Ascending aorta (tissue), 2 donors: ENCODE measurements at regions of chr12 and their contacts with region 1.

Region 1: GRCh38 chr12:112125250-112125999 is at the start of gene TRAFD1:
- DNase-seq: peak; percentile 92 to 98
- H3K4me3 ChIP-seq: peak within 1 kb of the TSS; percentile 87 to 94
- H3K27ac ChIP-seq: peak within 1 kb of the TSS; percentile 95 to 97
- H3K4me1 ChIP-seq: peaks cover 17 to 34% of the 10 kb centered on the region in 2 donors
- H3K27me3 ChIP-seq: no peaks in the 10 kb centered on the region
- CTCF ChIP-seq: no peak
- total RNA-seq, gene TRAFD1: 9.3 TPM

Region 2: GRCh38 chr12:111287125-111287900 is 838.1 kb before region 1 on chr12:
- intact Hi-C with region 1: no loop called
- DNase-seq: no peak
- H3K4me3 ChIP-seq: no peak overlapping the region
- H3K27ac ChIP-seq: no peak overlapping the region
- H3K4me1 ChIP-seq: no peaks in the 10 kb centered on the region
- H3K27me3 ChIP-seq: no peaks in the 10 kb centered on the region
- CTCF ChIP-seq: no peak

Region 3: GRCh38 chr12:111942557-111942956 is 182.9 kb before region 1 on chr12:
- intact Hi-C with region 1: loop called (anchors 10 kb)
- DNase-seq: no peak
- H3K4me3 ChIP-seq: no peak overlapping the region
- H3K27ac ChIP-seq: no peak overlapping the region
- H3K4me1 ChIP-seq: peaks cover 0 to 7% of the 10 kb centered on the region in 2 donors
- H3K27me3 ChIP-seq: no peaks in the 10 kb centered on the region
- CTCF ChIP-seq: no peak

Region 4: DNA sequence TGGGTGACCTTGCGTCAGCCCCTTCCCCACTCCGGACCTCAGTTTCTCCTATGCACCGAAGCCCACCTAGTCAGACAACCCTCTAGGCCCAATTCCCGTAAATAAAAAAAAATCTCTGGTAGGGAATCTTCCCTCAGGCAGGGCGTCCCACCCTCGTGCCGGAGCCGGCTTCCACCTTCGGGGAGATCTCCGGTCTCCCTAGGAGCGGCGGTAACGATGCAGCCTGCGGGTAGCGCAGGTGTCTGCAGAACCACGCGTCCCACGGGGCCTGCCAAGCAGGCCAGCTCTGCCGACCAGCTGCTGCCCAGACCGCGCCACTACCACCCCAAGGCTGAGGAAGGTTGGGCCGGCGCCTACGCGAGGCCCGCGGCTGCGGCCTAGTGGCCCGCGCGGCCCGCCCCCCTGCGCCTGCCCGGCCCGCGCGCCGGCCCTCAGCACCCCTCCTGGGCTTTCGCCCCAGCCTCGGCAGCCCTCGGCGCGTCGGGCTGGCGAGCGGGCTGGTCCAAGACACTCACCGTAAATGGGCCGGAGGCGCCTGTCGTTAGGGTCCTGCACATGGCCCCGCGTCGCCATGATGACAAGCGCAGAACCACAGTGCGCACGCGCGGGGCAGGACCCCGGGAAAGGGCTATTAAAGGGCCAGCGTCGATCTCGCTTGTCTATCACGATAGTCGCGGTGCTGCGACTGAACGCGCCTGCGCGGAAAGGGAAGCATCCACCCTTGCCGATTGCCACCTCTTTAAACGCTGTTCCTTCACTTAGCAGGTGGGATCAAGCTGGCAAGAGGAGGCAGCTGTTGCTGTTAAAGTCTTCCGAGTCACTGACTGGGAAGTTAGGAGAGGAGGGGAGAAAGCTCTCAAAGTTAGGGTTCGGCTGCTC is 17.0 kb before region 1 on chr12 and contains the start of gene NAA25:
- intact Hi-C with region 1: loop called (anchors 1 kb)
- DNase-seq: peak; percentile 59 to 94
- H3K4me3 ChIP-seq: peak within 1 kb of the TSS; percentile 83 to 91
- H3K27ac ChIP-seq: peak within 1 kb of the TSS; percentile 97 to 98
- H3K4me1 ChIP-seq: peaks cover 0 to 16% of the 10 kb centered on the region in 2 donors
- H3K27me3 ChIP-seq: no peaks in the 10 kb centered on the region
- CTCF ChIP-seq: no peak
- total RNA-seq, gene NAA25: 1.9 TPM

Region 5: DNA sequence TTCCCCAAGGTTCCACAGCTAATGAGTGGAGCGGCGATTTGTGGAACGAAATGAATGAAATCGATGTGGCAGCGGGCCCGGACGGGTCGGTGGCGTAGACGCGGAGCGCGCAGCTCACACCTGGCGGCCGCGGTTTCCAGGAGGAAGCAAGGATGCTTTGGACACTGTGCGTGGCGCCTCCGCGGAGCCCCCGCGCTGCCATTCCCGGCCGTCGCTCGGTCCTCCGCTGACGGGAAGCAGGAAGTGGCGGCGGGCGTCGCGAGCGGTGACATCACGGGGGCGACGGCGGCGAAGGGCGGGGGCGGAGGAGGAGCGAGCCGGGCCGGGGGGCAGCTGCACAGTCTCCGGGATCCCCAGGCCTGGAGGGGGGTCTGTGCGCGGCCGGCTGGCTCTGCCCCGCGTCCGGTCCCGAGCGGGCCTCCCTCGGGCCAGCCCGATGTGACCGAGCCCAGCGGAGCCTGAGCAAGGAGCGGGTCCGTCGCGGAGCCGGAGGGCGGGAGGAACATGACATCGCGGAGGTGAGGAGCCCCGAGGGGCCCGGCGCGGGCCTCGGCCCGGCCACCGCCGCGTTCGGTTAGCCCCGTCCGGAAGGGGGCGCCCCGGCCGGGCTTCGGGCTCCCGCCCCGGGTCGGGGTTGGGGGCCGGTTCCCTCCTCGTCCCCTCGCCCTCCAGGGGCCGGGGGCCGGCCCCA is 293.3 kb after region 1 on chr12 and contains the start of gene PTPN11:
- intact Hi-C with region 1: loop called (anchors 5 kb)
- DNase-seq: peak; percentile 53 to 93
- H3K4me3 ChIP-seq: peak within 1 kb of the TSS; percentile 84 to 95
- H3K27ac ChIP-seq: peak within 1 kb of the TSS; percentile 98 to 99
- H3K4me1 ChIP-seq: peaks cover 7 to 39% of the 10 kb centered on the region in 2 donors
- H3K27me3 ChIP-seq: no peaks in the 10 kb centered on the region
- CTCF ChIP-seq: peak in 1 of 3 experiments; percentile 29
- total RNA-seq, gene PTPN11: 70.2 TPM